HAP-1 (cell line): ENCODE measurements at regions of chr16 and their contacts with region 1.

Region 1: DNA sequence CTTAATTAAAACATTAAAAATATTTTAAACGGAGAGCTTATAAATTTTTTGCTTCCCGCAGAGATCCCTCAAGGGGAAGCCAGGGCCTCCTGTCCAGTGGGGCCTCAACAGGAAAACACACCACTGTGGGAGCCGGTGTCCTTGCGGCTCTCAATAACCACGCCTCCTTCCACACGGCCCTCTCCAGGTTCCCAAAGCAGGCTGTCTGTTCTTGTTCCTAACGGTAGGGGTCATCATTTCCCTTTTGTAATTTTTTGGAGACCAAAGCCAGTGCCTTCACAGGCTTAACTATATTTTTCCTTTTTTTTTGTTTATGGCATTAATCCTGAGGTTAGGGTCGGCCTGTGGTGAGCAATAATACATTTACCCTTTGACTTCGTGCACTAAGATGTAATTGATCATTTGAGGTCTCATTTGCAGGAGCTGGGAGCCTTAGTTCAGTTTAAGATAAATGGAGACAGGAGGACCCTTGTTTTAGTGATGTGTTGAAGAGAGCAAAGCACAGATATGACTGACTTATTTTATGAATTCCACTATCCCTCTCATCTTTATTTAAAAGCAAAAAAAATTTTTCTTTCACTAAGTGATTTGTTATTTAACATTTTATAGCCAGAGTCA is 77.5 kb upstream of the N4BP1 start:
- DNase-seq: peak; percentile 74 to 75
- H3K4me3 ChIP-seq: no peak overlapping the region
- H3K4me1 ChIP-seq: no peaks in the 10 kb centered on the region
- H3K27me3 ChIP-seq: peaks cover 2% of the 10 kb centered on the region; the same call in 1 of the 2 replicates

Region 2: DNA sequence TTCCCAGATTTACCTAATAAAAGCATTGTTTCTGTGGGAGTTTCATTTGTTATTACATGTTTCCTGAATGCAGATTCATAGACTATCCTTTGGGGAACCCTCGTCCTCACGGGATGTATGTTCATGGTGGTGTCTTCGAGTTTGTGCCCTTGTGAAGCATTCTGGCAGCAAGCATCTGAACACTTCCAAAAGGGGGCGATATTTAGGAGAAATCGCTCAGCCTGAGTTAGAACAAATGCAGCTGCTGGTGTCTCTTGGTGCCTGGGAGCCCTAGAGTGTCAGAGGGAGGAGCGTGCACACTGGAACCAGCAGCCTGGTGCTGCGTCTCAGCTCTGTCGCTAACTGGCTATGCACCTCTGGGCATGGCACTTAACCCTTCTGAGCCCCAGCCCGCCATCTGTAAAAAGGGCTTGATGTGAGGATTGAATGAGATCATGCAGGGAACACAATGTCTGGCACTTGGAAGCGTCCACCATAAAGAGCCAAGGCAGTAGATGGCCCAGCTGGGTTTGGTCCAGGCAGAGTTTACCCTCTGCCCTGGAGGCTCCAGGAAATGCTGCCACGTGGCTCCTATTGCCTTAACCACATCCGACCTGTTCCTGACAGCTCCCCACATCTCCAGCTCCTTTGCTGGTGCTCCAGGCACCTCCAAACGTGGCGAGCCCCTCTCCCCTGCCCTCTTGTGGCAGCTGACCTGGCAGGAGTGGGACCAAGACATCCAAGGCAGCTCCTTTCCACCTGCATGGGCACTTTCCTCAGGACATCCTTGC is 661.1 kb after region 1 on chr16:
- in situ Hi-C with region 1: loop called (anchors 10 kb)
- DNase-seq: no peak
- H3K4me3 ChIP-seq: no peak overlapping the region
- H3K4me1 ChIP-seq: no peaks in the 10 kb centered on the region
- H3K27me3 ChIP-seq: no peaks in the 10 kb centered on the region